Activated B cell treated with CpG ODN at 0.5 μM for 24 hours (primary cell): ENCODE measurements at regions of chr9 and their contacts with region 1.

Region 1: DNA sequence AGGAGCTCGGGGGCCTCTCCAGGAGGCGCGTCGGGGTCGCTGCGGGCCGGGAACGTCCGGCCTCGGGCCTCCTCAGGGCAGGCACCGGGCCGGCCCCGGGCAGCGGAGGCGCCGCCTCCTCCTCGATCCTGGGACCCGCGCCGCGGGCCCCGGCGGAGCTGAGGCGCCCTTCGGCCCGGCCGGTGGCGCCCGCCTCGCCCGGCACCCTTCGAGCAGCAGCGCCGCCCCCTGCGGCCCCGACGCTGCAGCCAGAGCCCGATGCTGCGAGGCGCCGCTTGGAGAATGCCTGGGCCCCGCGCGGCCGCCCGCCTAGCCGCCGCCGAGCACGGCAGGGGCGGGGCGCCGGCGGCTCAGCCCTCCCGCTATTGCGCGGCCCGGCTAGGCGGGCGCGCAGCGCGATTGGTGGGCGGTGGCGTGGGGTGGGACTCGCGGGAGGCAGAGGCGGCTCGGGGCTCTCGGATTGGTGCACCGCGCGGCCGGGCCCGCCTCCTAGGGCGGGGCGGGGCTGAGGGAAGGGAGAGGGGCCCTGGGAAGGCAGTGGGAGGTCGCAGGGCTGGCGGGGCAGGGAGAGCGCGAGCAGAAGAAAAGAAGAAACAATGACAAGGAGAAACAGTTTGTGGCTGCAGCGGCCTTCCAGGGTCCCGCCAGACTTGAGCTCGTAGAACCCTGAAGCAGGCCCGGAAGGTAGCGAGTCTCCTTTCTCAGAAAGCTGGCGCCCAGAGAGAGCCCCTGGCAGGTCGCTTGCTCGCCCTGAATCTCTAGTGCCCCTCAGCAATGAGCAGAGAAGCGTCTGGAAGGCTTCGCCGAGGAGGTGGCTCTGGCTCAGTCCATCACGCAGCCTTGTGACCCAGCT is at the start of gene EEIG1:
- DNase-seq: peak; percentile 99
- ATAC-seq: peak; percentile 82
- H3K4me3 Mint-ChIP-seq: peak within 1 kb of the TSS; percentile 94
- H3K27ac Mint-ChIP-seq: peak within 1 kb of the TSS; percentile 94
- H3K4me1 Mint-ChIP-seq: peaks cover 72% of the 10 kb centered on the region
- H3K27me3 Mint-ChIP-seq: no peaks in the 10 kb centered on the region
- CTCF ChIP-seq: no peak
- total RNA-seq, gene EEIG1: 65.8 and 88.1 TPM in 2 replicates

Region 2: DNA sequence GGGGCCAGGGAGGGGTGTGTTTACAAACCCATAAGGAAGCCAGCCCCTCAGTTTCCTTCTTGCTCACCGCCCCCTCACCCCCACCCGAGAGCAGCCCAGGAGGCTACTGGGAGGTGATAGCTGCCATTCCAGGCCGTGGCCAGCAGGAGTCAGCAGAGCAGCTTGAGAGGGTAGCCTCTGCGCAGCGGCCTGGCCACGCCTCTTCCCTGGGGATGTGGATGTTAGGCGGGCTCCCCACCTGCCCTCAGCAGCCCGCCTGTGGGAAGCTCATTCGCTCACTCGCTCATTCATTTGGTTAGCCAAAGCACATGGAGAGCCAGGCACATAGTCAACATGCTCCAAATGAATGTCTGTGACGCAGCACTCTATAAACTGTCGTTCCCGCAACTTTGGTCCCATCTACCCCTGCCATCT is 37.2 kb before region 1 on chr9:
- CTCF ChIA-PET with region 1: interaction called, 15 read pairs
- POLR2A ChIA-PET with region 1: interaction called, 3 read pairs
- intact Hi-C with region 1: loop called (anchors 2 kb)
- DNase-seq: peak; percentile 71
- ATAC-seq: peak; percentile 93
- H3K4me3 Mint-ChIP-seq: no peak overlapping the region
- H3K27ac Mint-ChIP-seq: peak overlapping the region; percentile 73
- H3K4me1 Mint-ChIP-seq: peaks cover 21% of the 10 kb centered on the region
- H3K27me3 Mint-ChIP-seq: no peaks in the 10 kb centered on the region
- CTCF ChIP-seq: no peak

Region 3: GRCh38 chr9:127970401-127971313 is 10.3 kb before region 1 on chr9:
- CTCF ChIA-PET with region 1: interaction called, 4 read pairs
- POLR2A ChIA-PET with region 1: interaction called, 93 read pairs
- intact Hi-C with region 1: loop called (anchors 1 kb)
- DNase-seq: peak; percentile 50
- ATAC-seq: peak; percentile 74
- H3K4me3 Mint-ChIP-seq: peak overlapping the region; percentile 79
- H3K27ac Mint-ChIP-seq: peak overlapping the region; percentile 97
- H3K4me1 Mint-ChIP-seq: peaks cover 100% of the 10 kb centered on the region
- H3K27me3 Mint-ChIP-seq: no peaks in the 10 kb centered on the region
- CTCF ChIP-seq: no peak

Region 4: DNA sequence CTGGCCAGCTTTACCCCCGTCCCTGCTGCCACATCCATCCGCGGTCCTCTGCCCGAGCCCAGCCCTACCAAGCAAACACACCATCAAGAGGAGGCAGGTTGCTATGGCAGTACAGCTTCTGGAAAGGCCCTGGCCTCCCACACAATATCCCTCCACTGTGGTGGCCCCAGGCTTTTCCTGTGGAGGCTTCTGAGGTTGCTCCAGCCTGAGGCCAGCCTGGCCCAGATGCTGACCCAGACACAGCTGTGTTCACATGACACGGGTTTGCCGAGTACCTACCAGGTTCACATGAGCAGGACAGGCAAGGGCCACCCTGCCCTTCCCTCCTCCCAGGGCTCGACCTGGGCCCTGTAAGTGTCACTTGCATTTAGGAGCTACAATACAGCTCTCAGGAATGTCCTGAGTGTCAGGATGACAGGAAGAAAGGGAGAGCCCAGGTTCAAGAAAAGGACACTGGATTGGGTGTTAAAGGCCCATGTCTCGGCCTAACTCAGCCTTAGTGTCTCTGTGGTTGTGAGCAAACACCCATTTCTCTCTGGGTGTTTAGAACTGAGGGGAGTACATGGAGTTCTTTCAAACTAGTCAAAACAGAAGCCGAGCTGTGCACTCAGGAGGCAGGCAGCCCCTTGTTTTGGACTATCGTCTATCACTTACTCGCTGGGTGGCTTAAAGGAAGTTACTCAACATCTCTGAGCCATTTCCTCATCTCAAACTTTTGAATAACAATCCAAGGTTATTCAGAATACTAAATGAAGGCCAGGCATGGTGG is 46.0 kb after region 1 on chr9:
- CTCF ChIA-PET with region 1: interaction called, 4 read pairs
- POLR2A ChIA-PET with region 1: interaction called, 78 read pairs
- intact Hi-C with region 1: loop called (anchors 1 kb)
- DNase-seq: no peak
- ATAC-seq: peak; percentile 14
- H3K4me3 Mint-ChIP-seq: peak overlapping the region; percentile 67
- H3K27ac Mint-ChIP-seq: peak overlapping the region; percentile 88
- H3K4me1 Mint-ChIP-seq: peaks cover 86% of the 10 kb centered on the region
- H3K27me3 Mint-ChIP-seq: no peaks in the 10 kb centered on the region
- CTCF ChIP-seq: no peak

Region 5: GRCh38 chr9:128117613-128118471 is 136.9 kb after region 1 on chr9:
- CTCF ChIA-PET with region 1: no interaction called
- POLR2A ChIA-PET with region 1: interaction called, 5 read pairs
- intact Hi-C with region 1: loop called (anchors 5 kb)
- DNase-seq: peak; percentile 98
- ATAC-seq: peak; percentile 48
- H3K4me3 Mint-ChIP-seq: no peak overlapping the region
- H3K27ac Mint-ChIP-seq: peak overlapping the region; percentile 56
- H3K4me1 Mint-ChIP-seq: peaks cover 42% of the 10 kb centered on the region
- H3K27me3 Mint-ChIP-seq: no peaks in the 10 kb centered on the region
- CTCF ChIP-seq: peak; percentile 99